MCF 10A (cell line): ENCODE measurements at regions of chr22 and their contacts with region 1.

Region 1: GRCh38 chr22:32796865-32797573 is 4.5 kb upstream of the TIMP3 start:
- DNase-seq: peak; percentile 55
- H3K4me3 Mint-ChIP-seq: no peak overlapping the region
- H3K27ac Mint-ChIP-seq: no peak overlapping the region
- H3K4me1 Mint-ChIP-seq: peaks cover under 1% of the 10 kb centered on the region
- H3K27me3 Mint-ChIP-seq: no peaks in the 10 kb centered on the region
- CTCF ChIP-seq: peak; percentile 95

Region 2: DNA sequence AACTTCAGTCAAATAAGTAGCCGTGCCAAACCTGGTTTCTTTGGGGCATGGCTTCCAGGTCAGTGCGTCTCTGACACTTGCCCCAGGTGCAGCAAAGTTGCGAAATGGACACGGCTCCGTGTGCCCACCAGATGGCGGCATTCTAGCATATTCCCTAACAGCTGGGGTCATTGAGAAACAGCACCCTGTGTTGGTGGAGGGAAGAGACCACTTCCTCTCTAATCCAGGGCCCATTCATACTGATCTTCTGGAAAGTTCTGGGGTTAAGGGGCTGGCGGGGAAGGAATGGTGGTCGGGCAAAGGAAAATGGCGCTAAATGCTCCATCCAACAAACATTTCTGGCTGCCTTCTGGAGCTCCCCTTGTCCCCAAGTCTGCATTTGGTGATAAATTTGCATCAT is 136.7 kb before region 1 on chr22:
- CTCF ChIA-PET with region 1: interaction called, 205 read pairs
- POLR2A ChIA-PET with region 1: interaction called, 13 read pairs
- intact Hi-C with region 1: loop called (anchors 1 kb)
- DNase-seq: peak; percentile 71
- H3K4me3 Mint-ChIP-seq: no peak overlapping the region
- H3K27ac Mint-ChIP-seq: no peak overlapping the region
- H3K4me1 Mint-ChIP-seq: peaks cover 7% of the 10 kb centered on the region
- H3K27me3 Mint-ChIP-seq: no peaks in the 10 kb centered on the region
- CTCF ChIP-seq: peak; percentile 93

Region 3: DNA sequence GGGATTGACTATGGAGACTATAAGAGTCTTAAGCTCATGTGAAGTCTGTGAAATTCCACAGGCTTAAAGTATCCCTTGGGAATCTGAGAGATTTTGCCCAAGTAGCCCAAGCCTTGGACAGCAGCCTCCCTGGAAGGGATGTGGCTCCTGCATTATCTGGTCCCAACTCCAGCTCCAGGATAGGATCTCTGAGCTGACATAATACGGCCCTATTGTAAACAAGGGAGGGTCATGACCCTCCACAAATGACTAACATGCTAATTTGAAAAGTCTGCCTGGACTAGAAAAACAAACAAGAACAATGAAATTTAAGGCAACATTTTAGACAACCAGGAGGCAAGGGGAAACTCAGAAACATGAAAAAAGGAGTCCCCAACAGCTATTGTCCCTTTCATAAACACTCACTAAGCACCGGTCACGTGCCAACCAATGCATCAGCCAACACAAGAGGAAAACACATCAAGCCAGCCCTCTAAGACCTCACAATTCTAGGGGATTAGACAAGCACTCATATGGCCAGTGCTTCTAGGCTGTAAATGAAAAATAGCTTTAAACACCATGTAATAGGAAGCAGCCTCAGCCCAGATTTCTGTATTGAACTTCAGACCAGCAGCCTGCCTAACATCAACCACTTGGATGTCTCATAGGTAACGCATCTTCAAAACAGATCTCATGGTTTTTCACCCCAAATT is 96.7 kb before region 1 on chr22:
- CTCF ChIA-PET with region 1: interaction called, 32 read pairs
- POLR2A ChIA-PET with region 1: interaction called, 4 read pairs
- intact Hi-C with region 1: no loop called
- DNase-seq: no peak
- H3K4me3 Mint-ChIP-seq: no peak overlapping the region
- H3K27ac Mint-ChIP-seq: peak overlapping the region; percentile 61
- H3K4me1 Mint-ChIP-seq: peaks cover 53% of the 10 kb centered on the region
- H3K27me3 Mint-ChIP-seq: no peaks in the 10 kb centered on the region
- CTCF ChIP-seq: no peak

Region 4: DNA sequence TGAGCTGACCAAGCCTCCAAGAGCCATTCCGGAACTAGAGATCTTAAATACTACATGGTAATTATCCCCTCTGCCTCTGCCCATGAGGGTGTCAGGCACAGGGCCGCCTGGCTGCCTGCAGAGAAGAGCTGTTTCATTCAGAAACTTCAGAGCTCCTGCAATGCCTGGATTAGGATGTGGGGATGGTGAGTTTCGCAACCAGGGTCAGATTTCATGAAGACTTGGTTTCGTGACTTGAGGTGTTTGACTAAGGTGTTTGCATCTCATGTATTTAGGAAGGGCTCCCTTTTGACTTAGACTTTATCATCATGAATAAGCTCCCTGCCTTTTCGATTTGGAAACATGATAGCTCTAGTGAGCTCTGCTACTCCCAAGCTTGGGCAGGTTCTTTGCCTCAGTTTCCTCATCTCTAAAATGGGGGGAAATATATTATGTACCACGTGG is 13.6 kb after region 1 on chr22:
- CTCF ChIA-PET with region 1: interaction called, 27 read pairs
- POLR2A ChIA-PET with region 1: interaction called, 5 read pairs
- intact Hi-C with region 1: no loop called
- DNase-seq: peak; percentile 85
- H3K4me3 Mint-ChIP-seq: no peak overlapping the region
- H3K27ac Mint-ChIP-seq: no peak overlapping the region
- H3K4me1 Mint-ChIP-seq: peaks cover 17% of the 10 kb centered on the region
- H3K27me3 Mint-ChIP-seq: no peaks in the 10 kb centered on the region
- CTCF ChIP-seq: no peak

Region 5: DNA sequence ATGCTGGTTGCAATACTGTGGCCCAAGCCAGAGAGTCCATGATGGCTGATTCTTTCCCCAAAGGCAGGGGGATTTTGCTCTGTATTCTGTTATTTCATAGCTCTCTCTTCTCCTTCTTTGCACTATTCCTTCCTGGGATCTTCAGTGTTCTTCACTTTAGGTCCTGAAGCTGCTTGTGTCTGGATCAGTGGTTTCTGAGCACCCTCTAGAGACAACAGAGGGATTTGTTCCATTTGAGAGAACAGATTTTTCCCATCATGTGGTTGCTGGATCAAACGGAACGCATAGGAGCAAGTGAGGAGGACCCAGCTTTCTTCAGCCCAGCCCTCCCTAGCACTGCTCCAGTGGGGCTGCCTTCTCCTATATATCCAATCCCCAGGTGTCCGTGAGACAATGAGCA is 329.9 kb after region 1 on chr22:
- CTCF ChIA-PET with region 1: no interaction called
- POLR2A ChIA-PET with region 1: no interaction called
- intact Hi-C with region 1: loop called (anchors 10 kb)
- DNase-seq: peak; percentile 50
- H3K4me3 Mint-ChIP-seq: no peak overlapping the region
- H3K27ac Mint-ChIP-seq: no peak overlapping the region
- H3K4me1 Mint-ChIP-seq: peaks cover 5% of the 10 kb centered on the region
- H3K27me3 Mint-ChIP-seq: no peaks in the 10 kb centered on the region
- CTCF ChIP-seq: peak; percentile 61